HepG2 (cell line): ENCODE measurements at regions of chr10 and their contacts with region 1.

Region 1: DNA sequence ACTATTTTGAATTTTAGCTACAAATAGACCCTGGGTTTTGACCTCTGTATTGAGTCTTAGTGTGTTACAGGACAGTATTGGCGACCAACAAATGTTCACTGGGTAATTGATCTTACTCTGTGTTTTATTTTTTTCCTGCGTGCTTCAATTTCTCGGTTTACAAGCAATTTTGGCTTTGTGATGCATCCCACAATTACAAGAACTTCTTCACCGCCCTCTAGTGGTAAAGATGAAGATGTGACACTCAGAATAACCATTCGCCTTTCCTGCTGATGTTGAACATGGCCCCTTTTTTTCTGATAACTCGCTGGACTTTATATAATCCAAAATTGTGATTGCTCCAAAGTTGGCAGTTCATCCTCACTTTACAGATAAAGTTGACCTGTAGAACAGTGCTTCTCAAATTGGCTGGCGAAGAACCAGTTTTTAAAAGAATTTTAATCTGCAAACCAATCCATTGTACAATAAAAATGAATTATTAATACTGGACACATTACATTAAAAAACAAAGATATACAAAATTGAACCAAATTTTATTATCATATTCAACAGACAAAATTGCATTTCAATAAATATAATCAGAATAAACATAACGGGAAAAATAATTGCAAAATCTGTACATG is 20.2 kb upstream of the SMC3 start:
- DNase-seq: peak; percentile 54
- ATAC-seq: peak; percentile 60; the same call in 2 of the 3 replicates
- H3K4me3 ChIP-seq: no peak overlapping the region
- H3K27ac ChIP-seq: no peak overlapping the region
- H3K4me1 ChIP-seq: no peaks in the 10 kb centered on the region
- H3K27me3 ChIP-seq: peaks cover 0 to 3% of the 10 kb centered on the region in 2 experiments; a peak in 2 of 5 replicates
- CTCF ChIP-seq: peak; percentile 80
- EP300 ChIP-seq: no peak
- POLR2A ChIP-seq: no peak
- RAD21 ChIP-seq: peak; percentile 72

Region 2: DNA sequence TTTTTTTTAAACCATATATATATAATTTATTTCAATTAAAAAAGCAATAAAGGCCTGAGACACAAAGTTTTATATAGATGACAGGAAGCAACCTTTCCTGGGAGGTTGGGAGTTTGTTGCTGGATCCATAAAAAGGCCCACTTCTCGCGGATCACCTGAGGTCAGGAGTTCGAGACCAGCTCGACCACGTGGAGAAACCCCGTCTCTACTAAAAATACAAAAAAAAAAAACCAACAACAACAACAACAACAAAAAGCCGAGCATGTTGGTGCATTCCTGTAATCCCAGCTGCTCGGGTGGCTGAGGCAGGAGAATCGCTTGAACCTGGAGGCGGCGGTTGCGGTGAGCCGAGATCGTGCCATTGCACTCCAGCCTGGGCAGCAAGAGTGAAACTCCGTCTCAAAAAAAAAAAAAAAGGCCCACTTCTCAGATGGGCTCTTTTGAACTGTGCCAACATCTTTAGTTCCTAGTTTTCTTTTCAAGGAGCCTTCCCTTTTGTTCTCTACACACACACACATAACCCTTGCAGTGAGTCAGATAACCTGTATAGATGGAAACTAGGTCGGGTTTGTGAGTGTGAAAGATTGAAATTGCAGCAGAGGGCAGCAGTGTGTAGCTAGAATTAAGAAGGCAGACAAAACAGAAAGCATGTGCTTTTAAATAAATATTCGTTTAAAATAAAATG is 241.3 kb before region 1 on chr10:
- CTCF ChIA-PET with region 1: interaction called, 16 read pairs
- POLR2A ChIA-PET with region 1: no interaction called
- in situ Hi-C with region 1: no loop called
- intact Hi-C with region 1: loop called (anchors 1 kb)
- DNase-seq: peak; percentile 74
- ATAC-seq: peak; percentile 51
- H3K4me3 ChIP-seq: peak overlapping the region in 2 of 3 experiments; percentile 93 to 99; a peak in 3 of 6 replicates
- H3K27ac ChIP-seq: peak overlapping the region; percentile 85
- H3K4me1 ChIP-seq: peaks cover 32% of the 10 kb centered on the region
- H3K27me3 ChIP-seq: no peaks in the 10 kb centered on the region; a peak in 1 of 5 replicates
- CTCF ChIP-seq: peak; percentile 69
- EP300 ChIP-seq: no peak
- POLR2A ChIP-seq: no peak
- RAD21 ChIP-seq: 0 out of 2 replicates have a peak, but pooled peaks have one; percentile 22

Region 3: GRCh38 chr10:110311357-110311949 is 235.8 kb before region 1 on chr10:
- CTCF ChIA-PET with region 1: interaction called, 16 read pairs
- POLR2A ChIA-PET with region 1: no interaction called
- in situ Hi-C with region 1: no loop called
- intact Hi-C with region 1: loop called (anchors 1 kb)
- DNase-seq: peak; percentile 42
- ATAC-seq: peak; percentile 68
- H3K4me3 ChIP-seq: no peak overlapping the region
- H3K27ac ChIP-seq: no peak overlapping the region
- H3K4me1 ChIP-seq: no peaks in the 10 kb centered on the region
- H3K27me3 ChIP-seq: peaks cover 0 to 3% of the 10 kb centered on the region in 2 experiments; a peak in 1 of 5 replicates
- CTCF ChIP-seq: peak; percentile 77
- EP300 ChIP-seq: no peak
- POLR2A ChIP-seq: no peak
- RAD21 ChIP-seq: peak; percentile 48; the same call in 1 of the 2 replicates

Region 4: DNA sequence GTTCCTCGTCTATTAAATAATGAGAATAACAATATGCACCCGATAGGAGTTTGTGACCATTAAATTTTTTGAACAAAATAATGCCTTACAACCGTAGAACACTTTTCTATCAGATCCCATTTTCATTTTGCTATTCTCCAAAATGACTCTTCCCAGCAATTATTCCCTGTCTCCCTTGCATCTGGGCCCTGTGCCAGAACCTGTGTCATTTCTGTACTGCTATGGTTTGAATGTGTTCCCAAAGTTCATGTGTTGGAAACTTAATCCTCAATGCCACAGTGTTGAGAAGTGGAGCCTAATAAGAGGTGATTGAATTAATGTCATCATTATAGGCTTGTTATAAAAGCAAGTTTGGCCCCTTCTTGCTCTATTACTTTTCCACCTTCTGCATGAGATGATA is 209.3 kb before region 1 on chr10:
- CTCF ChIA-PET with region 1: no interaction called
- POLR2A ChIA-PET with region 1: no interaction called
- in situ Hi-C with region 1: no loop called
- intact Hi-C with region 1: no loop called
- DNase-seq: no peak
- ATAC-seq: no peak
- H3K4me3 ChIP-seq: no peak overlapping the region
- H3K27ac ChIP-seq: no peak overlapping the region
- H3K4me1 ChIP-seq: no peaks in the 10 kb centered on the region
- H3K27me3 ChIP-seq: peaks cover 0 to 23% of the 10 kb centered on the region in 2 experiments; a peak in 4 of 5 replicates
- CTCF ChIP-seq: no peak
- EP300 ChIP-seq: no peak
- POLR2A ChIP-seq: no peak
- RAD21 ChIP-seq: no peak

Region 5: GRCh38 chr10:110354322-110354766 is 192.9 kb before region 1 on chr10:
- CTCF ChIA-PET with region 1: interaction called, 27 read pairs
- POLR2A ChIA-PET with region 1: no interaction called
- in situ Hi-C with region 1: loop called (anchors 5 kb)
- intact Hi-C with region 1: loop called (anchors 1 kb)
- DNase-seq: peak; percentile 41
- ATAC-seq: peak; percentile 90
- H3K4me3 ChIP-seq: no peak overlapping the region
- H3K27ac ChIP-seq: no peak overlapping the region
- H3K4me1 ChIP-seq: peaks cover 14% of the 10 kb centered on the region
- H3K27me3 ChIP-seq: peaks cover 0 to 33% of the 10 kb centered on the region in 2 experiments; a peak in 2 of 5 replicates
- CTCF ChIP-seq: peak; percentile 69
- EP300 ChIP-seq: no peak
- POLR2A ChIP-seq: no peak
- RAD21 ChIP-seq: peak; percentile 66

Region 6: DNA sequence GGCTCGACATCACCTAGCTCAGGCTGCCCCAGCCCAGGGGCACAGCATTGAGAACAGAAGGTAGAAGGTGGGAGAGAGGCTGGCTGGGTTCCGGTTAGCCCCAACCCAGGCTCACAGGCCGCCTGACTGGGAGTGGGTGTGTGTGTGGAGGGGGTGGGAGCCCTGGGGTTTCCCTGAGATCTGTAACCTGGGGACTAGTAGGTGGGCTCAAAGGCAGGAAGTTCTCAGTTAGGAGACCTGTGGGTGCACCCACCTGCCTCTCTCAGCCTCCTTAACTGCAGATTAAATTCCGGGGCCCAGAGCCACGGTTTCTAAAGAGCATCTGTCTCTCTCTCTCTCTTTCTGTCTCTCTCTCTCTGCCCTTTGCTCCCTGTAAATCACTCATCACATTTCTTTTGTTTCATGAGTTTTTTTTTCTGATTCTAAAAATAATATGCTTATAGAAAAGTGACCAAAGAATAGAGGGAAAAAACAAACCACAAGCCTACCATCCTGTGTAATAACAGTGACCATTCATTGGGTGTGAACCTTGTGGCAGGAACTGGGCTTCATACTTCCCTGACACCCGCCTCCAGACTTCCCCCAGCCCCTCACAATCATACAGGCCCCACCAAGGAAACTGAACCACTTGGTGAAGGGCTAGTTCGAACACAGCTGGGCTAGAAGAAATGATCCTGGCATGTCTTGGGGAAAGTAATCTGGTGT is 159.1 kb before region 1 on chr10:
- CTCF ChIA-PET with region 1: interaction called, 7 read pairs
- POLR2A ChIA-PET with region 1: no interaction called
- in situ Hi-C with region 1: no loop called
- intact Hi-C with region 1: loop called (anchors 1 kb)
- DNase-seq: no peak
- ATAC-seq: no peak
- H3K4me3 ChIP-seq: no peak overlapping the region
- H3K27ac ChIP-seq: no peak overlapping the region
- H3K4me1 ChIP-seq: no peaks in the 10 kb centered on the region
- H3K27me3 ChIP-seq: peaks cover 0 to 13% of the 10 kb centered on the region in 2 experiments; a peak in 2 of 5 replicates
- CTCF ChIP-seq: no peak
- EP300 ChIP-seq: no peak
- POLR2A ChIP-seq: no peak
- RAD21 ChIP-seq: no peak

Region 7: DNA sequence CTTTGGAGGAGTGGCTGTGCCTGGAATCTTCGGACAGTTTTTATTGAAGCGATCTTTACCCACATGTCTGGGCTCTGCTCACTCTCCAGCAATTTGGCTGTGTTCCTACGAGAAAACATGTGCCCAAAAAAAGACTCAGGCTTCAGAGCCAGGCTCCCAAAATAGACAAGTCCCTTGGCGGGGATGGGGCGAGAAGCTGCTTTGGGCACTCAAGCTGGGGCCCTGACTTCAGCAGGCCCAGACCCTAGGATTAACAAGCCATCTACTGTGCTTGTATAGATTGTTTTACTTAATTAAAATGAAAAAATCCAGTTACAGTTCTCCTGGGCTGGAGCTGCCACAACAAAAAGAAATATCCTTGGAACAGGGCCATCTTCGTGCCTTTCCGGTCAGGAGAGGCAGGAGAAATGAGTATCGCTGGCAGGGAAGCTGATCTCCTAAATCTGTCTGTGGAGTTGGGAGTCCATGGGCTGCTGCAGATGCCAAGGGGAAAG is 273.1 kb after region 1 on chr10:
- CTCF ChIA-PET with region 1: no interaction called
- POLR2A ChIA-PET with region 1: no interaction called
- in situ Hi-C with region 1: no loop called
- intact Hi-C with region 1: no loop called
- DNase-seq: no peak
- ATAC-seq: no peak
- H3K4me3 ChIP-seq: no peak overlapping the region
- H3K27ac ChIP-seq: no peak overlapping the region
- H3K4me1 ChIP-seq: peaks cover 50% of the 10 kb centered on the region
- H3K27me3 ChIP-seq: peaks cover 0 to 1% of the 10 kb centered on the region in 2 experiments; a peak in 1 of 5 replicates
- CTCF ChIP-seq: no peak
- EP300 ChIP-seq: no peak
- POLR2A ChIP-seq: no peak
- RAD21 ChIP-seq: no peak